Prostate gland (tissue), 2 donors: ENCODE measurements at regions of chr1 and their contacts with region 1.

Region 1: DNA sequence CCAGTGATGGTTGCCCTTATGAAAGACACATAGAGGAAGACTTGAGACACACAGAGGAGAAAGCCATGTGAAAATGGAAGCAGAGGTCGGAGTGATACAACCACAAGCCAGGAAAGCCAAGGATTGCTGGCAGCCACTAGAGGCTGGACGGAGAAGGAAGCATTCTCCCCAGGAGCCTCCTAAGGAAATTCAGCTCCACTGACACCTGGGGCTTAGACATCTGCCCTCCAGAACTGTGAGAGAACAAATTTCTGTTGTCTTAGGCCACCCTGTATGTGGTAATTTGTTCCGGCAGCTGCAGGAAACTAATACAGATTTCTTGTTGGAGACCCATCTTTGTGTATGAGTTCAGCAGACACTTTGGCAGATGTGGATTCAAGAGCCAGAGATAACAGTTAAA is 126.9 kb upstream of the ATP1A1 start:
- DNase-seq: no peak
- H3K4me3 ChIP-seq: no peak overlapping the region
- H3K27ac ChIP-seq: no peak overlapping the region
- H3K4me1 ChIP-seq: peaks cover 5% of the 10 kb centered on the region
- H3K27me3 ChIP-seq: no peaks in the 10 kb centered on the region
- CTCF ChIP-seq: no peak
- POLR2A ChIP-seq: no peak

Region 2: GRCh38 chr1:116075577-116076380 is 170.4 kb before region 1 on chr1:
- intact Hi-C with region 1: no loop called
- DNase-seq: no peak
- H3K4me3 ChIP-seq: no peak overlapping the region
- H3K27ac ChIP-seq: no peak overlapping the region
- H3K4me1 ChIP-seq: no peaks in the 10 kb centered on the region
- H3K27me3 ChIP-seq: no peaks in the 10 kb centered on the region
- CTCF ChIP-seq: no peak
- POLR2A ChIP-seq: no peak

Region 3: GRCh38 chr1:116151739-116152576 is 94.2 kb before region 1 on chr1:
- intact Hi-C with region 1: no loop called
- DNase-seq: peak; percentile 71
- H3K4me3 ChIP-seq: peak overlapping the region; percentile 29 to 37
- H3K27ac ChIP-seq: peak overlapping the region; percentile 55 to 60
- H3K4me1 ChIP-seq: no peaks in the 10 kb centered on the region
- H3K27me3 ChIP-seq: no peaks in the 10 kb centered on the region
- CTCF ChIP-seq: peak; percentile 90 to 97 (median 94)
- POLR2A ChIP-seq: peak; percentile 7

Region 4: GRCh38 chr1:116185161-116185701 is 60.9 kb before region 1 on chr1:
- intact Hi-C with region 1: loop called (anchors 5 kb)
- DNase-seq: no peak
- H3K4me3 ChIP-seq: no peak overlapping the region
- H3K27ac ChIP-seq: no peak overlapping the region
- H3K4me1 ChIP-seq: no peaks in the 10 kb centered on the region
- H3K27me3 ChIP-seq: no peaks in the 10 kb centered on the region
- CTCF ChIP-seq: no peak
- POLR2A ChIP-seq: no peak